Mammary epithelial cell (primary cell): ENCODE measurements at regions of chr15 and their contacts with region 1.

Region 1: DNA sequence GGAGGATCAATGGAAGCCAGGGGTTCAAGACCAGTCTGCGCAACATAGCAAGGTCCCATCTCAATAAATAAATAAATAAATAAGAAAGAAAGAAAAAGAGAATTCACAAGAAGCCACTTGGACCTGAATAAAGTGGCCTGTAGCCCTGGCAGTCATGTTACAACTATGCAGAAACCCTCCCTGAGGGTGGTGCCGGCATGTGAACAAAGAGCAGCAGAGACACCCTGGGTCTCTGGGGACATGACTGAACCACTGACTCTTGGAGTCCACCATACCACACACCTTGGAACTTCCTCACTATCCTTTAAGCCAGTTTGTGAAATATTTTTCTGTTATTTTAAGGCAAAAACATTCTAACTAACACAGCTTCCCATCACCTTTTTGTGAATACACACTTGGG is 93.0 kb downstream of the MEIS2 start:
- DNase-seq: no peak
- H3K4me3 ChIP-seq: no peak overlapping the region
- H3K27ac ChIP-seq: no peak overlapping the region
- H3K4me1 ChIP-seq: no peaks in the 10 kb centered on the region
- H3K27me3 ChIP-seq: no peaks in the 10 kb centered on the region
- CTCF ChIP-seq: no peak

Region 2: GRCh38 chr15:36932070-36932469 is 75.2 kb before region 1 on chr15:
- CTCF ChIA-PET with region 1: no interaction called
- dilution Hi-C with region 1: loop called (anchors 5 kb)
- in situ Hi-C with region 1: no loop called
- intact Hi-C with region 1: no loop called
- DNase-seq: no peak
- H3K4me3 ChIP-seq: no peak overlapping the region
- H3K27ac ChIP-seq: no peak overlapping the region
- H3K4me1 ChIP-seq: no peaks in the 10 kb centered on the region
- H3K27me3 ChIP-seq: no peaks in the 10 kb centered on the region
- CTCF ChIP-seq: no peak

Region 3: GRCh38 chr15:36965570-36966342 is 41.5 kb before region 1 on chr15:
- CTCF ChIA-PET with region 1: no interaction called
- dilution Hi-C with region 1: no loop called
- in situ Hi-C with region 1: no loop called
- intact Hi-C with region 1: no loop called
- DNase-seq: no peak
- H3K4me3 ChIP-seq: no peak overlapping the region
- H3K27ac ChIP-seq: no peak overlapping the region
- H3K4me1 ChIP-seq: no peaks in the 10 kb centered on the region
- H3K27me3 ChIP-seq: no peaks in the 10 kb centered on the region
- CTCF ChIP-seq: no peak